ENCODE measurements at regions of chr7 and their contacts with region 1.

Region 1: GRCh38 chr7:148962823-148963582 is 65.3 kb downstream of the PDIA4 start:
- DNase-seq: peak; percentile 67
- ATAC-seq: peak; percentile 69
- H3K4me3 ChIP-seq: peak overlapping the region; percentile 62
- H3K27ac ChIP-seq: no peak overlapping the region
- H3K4me1 ChIP-seq: no peaks in the 10 kb centered on the region
- H3K27me3 ChIP-seq: peaks cover 3% of the 10 kb centered on the region; the same call in 1 of the 2 replicates
- CTCF ChIP-seq: peak; percentile 88
- POLR2A ChIP-seq: 0 out of 2 replicates have a peak, but pooled peaks have one; percentile 30
- RAD21 ChIP-seq: peak; percentile 96

Region 2: GRCh38 chr7:148262721-148263229 is 700.2 kb before region 1 on chr7:
- CTCF ChIA-PET with region 1: no interaction called
- POLR2A ChIA-PET with region 1: interaction called, 4 read pairs
- dilution Hi-C with region 1: no loop called
- in situ Hi-C with region 1: loop called (anchors 25 kb)
- intact Hi-C with region 1: loop called (anchors 10 kb)
- DNase-seq: peak; percentile 4
- ATAC-seq: peak; percentile 78
- H3K4me3 ChIP-seq: no peak overlapping the region
- H3K27ac ChIP-seq: no peak overlapping the region
- H3K4me1 ChIP-seq: no peaks in the 10 kb centered on the region
- H3K27me3 ChIP-seq: no peaks in the 10 kb centered on the region
- CTCF ChIP-seq: peak; percentile 58
- POLR2A ChIP-seq: no peak
- RAD21 ChIP-seq: peak; percentile 71

Region 3: GRCh38 chr7:148503875-148504487 is 459.0 kb before region 1 on chr7:
- CTCF ChIA-PET with region 1: interaction called, 5 read pairs
- POLR2A ChIA-PET with region 1: no interaction called
- dilution Hi-C with region 1: no loop called
- in situ Hi-C with region 1: loop called (anchors 5 kb)
- intact Hi-C with region 1: loop called (anchors 1 kb)
- DNase-seq: peak; percentile 37
- ATAC-seq: no peak
- H3K4me3 ChIP-seq: no peak overlapping the region
- H3K27ac ChIP-seq: no peak overlapping the region
- H3K4me1 ChIP-seq: no peaks in the 10 kb centered on the region
- H3K27me3 ChIP-seq: peaks cover 8% of the 10 kb centered on the region
- CTCF ChIP-seq: peak; percentile 85
- POLR2A ChIP-seq: no peak
- RAD21 ChIP-seq: peak; percentile 77

Region 4: GRCh38 chr7:148575640-148576411 is 387.2 kb before region 1 on chr7:
- CTCF ChIA-PET with region 1: interaction called, 4 read pairs
- POLR2A ChIA-PET with region 1: no interaction called
- dilution Hi-C with region 1: no loop called
- in situ Hi-C with region 1: loop called (anchors 5 kb)
- intact Hi-C with region 1: loop called (anchors 1 kb)
- DNase-seq: peak; percentile 41
- ATAC-seq: peak; percentile 98
- H3K4me3 ChIP-seq: no peak overlapping the region
- H3K27ac ChIP-seq: no peak overlapping the region
- H3K4me1 ChIP-seq: no peaks in the 10 kb centered on the region
- H3K27me3 ChIP-seq: peaks cover 2% of the 10 kb centered on the region; the same call in 1 of the 2 replicates
- CTCF ChIP-seq: peak; percentile 85
- POLR2A ChIP-seq: no peak
- RAD21 ChIP-seq: peak; percentile 83

Region 5: DNA sequence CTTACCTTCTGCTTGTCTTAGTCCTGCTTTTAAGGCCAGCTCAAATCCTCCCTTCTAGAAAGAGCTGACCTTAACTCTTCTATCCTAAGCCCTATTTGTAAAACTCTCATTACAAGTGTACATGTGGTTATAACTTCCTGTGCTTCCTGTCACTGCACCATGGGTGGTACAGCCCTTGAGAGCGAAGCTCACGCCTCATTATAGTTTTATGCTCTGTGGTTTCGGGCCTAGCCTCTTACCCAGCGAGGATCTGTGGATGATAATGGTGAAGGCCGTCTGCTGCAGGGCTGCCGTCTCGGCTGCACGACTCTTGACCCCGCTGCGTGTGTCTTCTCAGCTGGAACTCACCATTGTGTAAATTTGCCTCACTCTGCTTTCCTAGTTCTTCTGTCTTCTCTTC is 189.7 kb before region 1 on chr7:
- CTCF ChIA-PET with region 1: interaction called, 4 read pairs
- POLR2A ChIA-PET with region 1: no interaction called
- dilution Hi-C with region 1: no loop called
- in situ Hi-C with region 1: no loop called
- intact Hi-C with region 1: loop called (anchors 2 kb)
- DNase-seq: no peak
- ATAC-seq: no peak
- H3K4me3 ChIP-seq: no peak overlapping the region
- H3K27ac ChIP-seq: peak overlapping the region; percentile 37
- H3K4me1 ChIP-seq: peaks cover 5% of the 10 kb centered on the region
- H3K27me3 ChIP-seq: no peaks in the 10 kb centered on the region
- CTCF ChIP-seq: no peak
- POLR2A ChIP-seq: no peak
- RAD21 ChIP-seq: no peak

Region 6: GRCh38 chr7:148793590-148793989 is 169.4 kb before region 1 on chr7:
- CTCF ChIA-PET with region 1: interaction called, 3 read pairs
- POLR2A ChIA-PET with region 1: no interaction called
- dilution Hi-C with region 1: no loop called
- in situ Hi-C with region 1: no loop called
- intact Hi-C with region 1: loop called (anchors 5 kb)
- DNase-seq: no peak
- ATAC-seq: no peak
- H3K4me3 ChIP-seq: no peak overlapping the region
- H3K27ac ChIP-seq: peak overlapping the region; percentile 36; the same call in 1 of the 2 replicates
- H3K4me1 ChIP-seq: no peaks in the 10 kb centered on the region
- H3K27me3 ChIP-seq: no peaks in the 10 kb centered on the region
- CTCF ChIP-seq: no peak
- POLR2A ChIP-seq: no peak
- RAD21 ChIP-seq: no peak

Region 7: DNA sequence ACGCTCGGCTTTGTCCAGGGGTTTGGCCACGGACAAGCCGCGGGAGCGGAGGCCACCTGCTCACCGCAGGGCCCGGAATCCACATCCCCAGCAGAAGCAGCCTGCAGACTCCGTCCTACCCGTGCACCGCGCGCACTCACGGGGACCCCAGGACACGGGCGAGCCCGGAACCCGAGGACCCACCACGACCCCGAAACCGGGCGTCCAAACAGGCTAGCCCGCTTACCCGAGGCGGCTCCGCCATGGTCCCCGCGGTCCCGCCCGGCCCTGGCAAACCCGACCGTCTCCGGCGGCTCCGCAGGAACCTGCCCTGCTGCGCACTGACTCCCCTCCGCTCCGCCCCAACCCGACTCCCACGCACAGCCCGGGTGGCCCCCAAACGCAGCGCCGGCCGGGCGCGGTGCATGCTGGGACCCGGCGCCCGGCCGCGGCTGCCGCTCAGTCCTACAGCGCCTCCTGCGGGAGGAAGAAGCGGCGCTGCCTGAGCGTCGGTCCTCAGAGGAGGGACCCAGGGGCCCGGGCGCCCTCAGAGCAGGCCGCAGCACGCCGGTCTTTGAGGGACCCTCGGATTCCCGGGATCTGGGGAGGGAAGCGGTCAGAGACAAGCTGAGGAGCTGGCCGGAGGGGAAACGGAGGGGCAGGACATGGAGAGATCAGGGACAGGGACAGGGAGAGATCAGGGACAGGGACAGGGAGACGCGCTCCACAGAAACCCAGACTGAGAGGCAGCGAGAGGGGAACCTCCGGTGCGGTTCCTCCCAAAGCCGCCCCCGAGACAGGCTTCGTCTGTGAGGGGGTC is 127.6 kb after region 1 on chr7 and contains the start of gene ZNF786:
- CTCF ChIA-PET with region 1: no interaction called
- POLR2A ChIA-PET with region 1: no interaction called
- dilution Hi-C with region 1: no loop called
- in situ Hi-C with region 1: no loop called
- intact Hi-C with region 1: no loop called
- DNase-seq: peak; percentile 87
- ATAC-seq: peak; percentile 96
- H3K4me3 ChIP-seq: peak within 1 kb of the TSS; percentile 89
- H3K27ac ChIP-seq: peak within 1 kb of the TSS; percentile 68
- H3K4me1 ChIP-seq: no peaks in the 10 kb centered on the region
- H3K27me3 ChIP-seq: no peaks in the 10 kb centered on the region
- CTCF ChIP-seq: peak; percentile 97
- POLR2A ChIP-seq: peak; percentile 50; the same call in 1 of the 2 replicates
- RAD21 ChIP-seq: peak; percentile 82
- total RNA-seq, gene ZNF786: 5.8 and 7.3 TPM in 2 replicates

Measured in IMR-90 (cell line).